ENCODE measurements at regions of chr2 and their contacts with region 1.

Region 1: GRCh38 chr2:178397002-178397605 is 53.9 kb downstream of the PRKRA start:
- DNase-seq: peak; percentile 34
- CTCF ChIP-seq: peak; percentile 64

Region 2: DNA sequence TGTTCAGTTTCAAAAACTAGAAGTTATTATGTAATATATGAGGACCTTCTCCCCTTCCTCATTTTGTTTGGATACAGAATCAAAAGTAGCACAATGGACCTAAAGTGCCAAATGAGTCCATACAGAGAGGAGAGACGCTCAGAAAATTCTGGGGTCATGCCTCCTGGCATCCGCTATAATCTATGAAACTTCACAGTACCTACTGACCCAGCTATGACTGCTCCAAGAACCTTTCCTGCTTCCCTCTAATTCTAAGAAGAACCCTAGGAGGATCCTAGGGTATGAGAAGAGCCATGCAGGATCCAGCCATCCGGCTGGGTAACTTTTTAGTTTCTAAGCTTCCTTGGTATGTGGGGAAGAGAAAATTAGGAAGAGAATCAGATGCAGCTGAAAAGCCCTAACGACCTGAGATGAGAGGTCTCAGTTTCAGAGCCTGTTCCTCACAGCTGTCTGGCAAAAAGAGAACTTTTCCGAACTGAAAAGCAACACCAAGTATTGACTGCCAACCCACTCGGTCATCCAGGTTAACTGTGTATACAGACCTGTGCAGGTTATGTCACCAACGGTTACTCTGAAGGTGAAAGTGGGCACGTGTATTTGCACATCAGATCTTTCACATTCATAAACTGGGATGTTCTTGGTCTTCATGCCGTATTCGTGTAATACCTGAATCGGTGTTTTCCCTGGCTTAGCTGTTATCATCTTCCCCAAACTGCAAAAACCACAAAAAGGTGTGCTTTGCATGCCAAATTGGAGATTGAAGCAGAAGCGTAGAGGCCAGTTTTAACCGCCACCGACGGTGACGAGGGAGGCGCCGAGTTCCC is 52.8 kb after region 1 on chr2:
- in situ Hi-C with region 1: loop called (anchors 10 kb)
- DNase-seq: no peak
- CTCF ChIP-seq: no peak